Heart right ventricle (tissue), 16 donors: ENCODE measurements at regions of chr4 and their contacts with region 1.

Region 1: DNA sequence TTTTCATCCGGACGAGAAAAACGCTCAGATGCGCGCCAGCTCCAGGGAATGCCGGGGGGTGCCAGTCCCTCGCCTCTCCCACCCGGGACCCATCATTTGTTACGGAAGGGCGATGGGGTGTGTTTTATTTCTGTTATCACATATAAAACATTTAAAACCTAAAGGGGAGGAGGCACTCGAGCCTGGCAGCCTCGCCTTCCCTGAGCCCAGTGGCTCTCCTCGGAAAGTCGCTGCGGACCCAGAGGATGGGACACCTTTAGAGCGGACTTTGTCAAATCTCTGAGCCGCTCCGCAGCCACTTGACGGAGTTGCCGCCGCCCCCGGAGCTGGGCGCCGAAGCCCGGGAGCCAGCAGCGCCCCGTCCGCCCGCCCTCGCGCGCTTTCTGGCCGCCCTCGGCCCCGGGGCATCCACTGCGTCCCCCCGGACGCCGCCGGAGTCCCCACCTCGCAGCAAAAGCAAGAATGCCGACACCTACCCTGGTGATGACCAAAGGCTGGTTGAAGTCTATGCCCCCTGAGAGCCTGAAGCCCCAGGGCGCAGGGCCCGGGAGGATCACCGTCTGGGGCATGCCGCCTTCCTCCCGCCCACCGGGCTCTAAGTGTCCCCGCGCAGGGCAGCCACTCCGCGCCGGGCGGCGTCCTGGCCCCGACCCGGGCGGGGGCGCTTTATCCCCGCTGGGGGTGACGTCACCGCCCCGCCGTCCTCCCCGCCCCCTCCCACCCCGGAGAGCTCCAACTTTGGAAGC is at the start of gene PDLIM3:
- DNase-seq: peak; percentile 72 to 80
- ATAC-seq: peak; percentile 80 to 95 (median 86)
- H3K4me3 ChIP-seq: peak within 1 kb of the TSS; percentile 63 to 95 (median 79)
- H3K27ac ChIP-seq: peak within 1 kb of the TSS; percentile 90 to 99 (median 95)
- H3K4me1 ChIP-seq: peaks cover 0 to 34% (median 14%) of the 10 kb centered on the region in 9 donors
- H3K27me3 ChIP-seq: peaks cover 0 to 52% (median 4%) of the 10 kb centered on the region in 7 donors
- CTCF ChIP-seq: peak in 1 of 9 donors; percentile 32
- total RNA-seq, gene PDLIM3: 112 to 846 (median 292) TPM

Region 2: DNA sequence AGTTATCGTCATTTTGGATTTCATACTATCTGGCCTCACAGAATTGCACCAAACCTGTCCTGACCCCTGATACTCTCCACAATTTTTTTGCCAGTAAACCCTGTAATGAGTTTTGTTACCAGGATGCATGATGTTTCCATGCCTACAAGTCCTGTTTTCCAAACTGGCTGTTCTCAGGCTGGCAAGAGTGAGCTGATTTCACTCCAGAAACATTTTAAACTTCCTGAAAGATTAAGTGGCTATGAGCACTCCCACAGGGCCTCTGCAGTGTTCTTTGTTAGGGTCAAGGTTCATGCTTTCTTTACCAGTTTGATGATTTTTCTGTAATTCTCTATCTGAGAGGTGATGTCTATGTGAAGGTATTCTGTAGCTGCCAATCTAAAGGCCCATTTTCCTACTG is 31.9 kb after region 1 on chr4:
- intact Hi-C with region 1: loop called in 4 of 10 experiments (anchors 1 to 2 kb)
- DNase-seq: peak in 1 of 2 donors; percentile 78
- ATAC-seq: peak; percentile 72 to 88 (median 81)
- H3K4me3 ChIP-seq: peak overlapping the region in 1 of 10 donors; percentile 5
- H3K27ac ChIP-seq: peak overlapping the region; percentile 73 to 95 (median 90)
- H3K4me1 ChIP-seq: peaks cover 10 to 47% (median 26%) of the 10 kb centered on the region in 9 donors
- H3K27me3 ChIP-seq: no peaks in the 10 kb centered on the region
- CTCF ChIP-seq: no peak

Region 3: GRCh38 chr4:185576962-185577950 is 42.2 kb after region 1 on chr4:
- intact Hi-C with region 1: loop called in 1 of 10 experiments (anchors 5 kb)
- DNase-seq: no peak
- ATAC-seq: peak in 5 of 8 donors; percentile 25 to 49 (median 39)
- H3K4me3 ChIP-seq: no peak overlapping the region
- H3K27ac ChIP-seq: peak overlapping the region in 9 of 10 donors; percentile 27 to 81 (median 58)
- H3K4me1 ChIP-seq: peaks cover 0 to 33% (median 12%) of the 10 kb centered on the region in 9 donors
- H3K27me3 ChIP-seq: no peaks in the 10 kb centered on the region
- CTCF ChIP-seq: no peak